ENCODE measurements at regions of chr7 and their contacts with region 1.

Region 1: GRCh38 chr7:5704534-5704922 is 76.9 kb downstream of the RNF216 start:
- DNase-seq: peak; percentile 60 to 89 (median 72)
- ATAC-seq: no peak
- H3K4me3 ChIP-seq: no peak overlapping the region
- H3K4me3 Mint-ChIP-seq: no peak overlapping the region
- H3K27ac ChIP-seq: no peak overlapping the region
- H3K27ac Mint-ChIP-seq: peak overlapping the region; percentile 24
- H3K4me1 ChIP-seq: peaks cover 31% of the 10 kb centered on the region
- H3K4me1 Mint-ChIP-seq: peaks cover 42% of the 10 kb centered on the region
- H3K27me3 ChIP-seq: no peaks in the 10 kb centered on the region
- H3K27me3 Mint-ChIP-seq: no peaks in the 10 kb centered on the region
- CTCF ChIP-seq: peak; percentile 88

Region 2: GRCh38 chr7:5345671-5346070 is 358.9 kb before region 1 on chr7:
- CTCF ChIA-PET with region 1: no interaction called
- POLR2A ChIA-PET with region 1: no interaction called
- intact Hi-C with region 1: no loop called
- DNase-seq: no peak
- ATAC-seq: no peak
- H3K4me3 ChIP-seq: no peak overlapping the region
- H3K4me3 Mint-ChIP-seq: no peak overlapping the region
- H3K27ac ChIP-seq: no peak overlapping the region
- H3K27ac Mint-ChIP-seq: no peak overlapping the region
- H3K4me1 ChIP-seq: no peaks in the 10 kb centered on the region
- H3K4me1 Mint-ChIP-seq: no peaks in the 10 kb centered on the region
- H3K27me3 ChIP-seq: no peaks in the 10 kb centered on the region
- H3K27me3 Mint-ChIP-seq: no peaks in the 10 kb centered on the region
- CTCF ChIP-seq: no peak

Region 3: GRCh38 chr7:5363729-5364128 is 340.8 kb before region 1 on chr7:
- CTCF ChIA-PET with region 1: no interaction called
- POLR2A ChIA-PET with region 1: no interaction called
- intact Hi-C with region 1: loop called in 1 of 2 experiments (anchors 10 kb)
- DNase-seq: no peak
- ATAC-seq: no peak
- H3K4me3 ChIP-seq: no peak overlapping the region
- H3K4me3 Mint-ChIP-seq: no peak overlapping the region
- H3K27ac ChIP-seq: no peak overlapping the region
- H3K27ac Mint-ChIP-seq: no peak overlapping the region
- H3K4me1 ChIP-seq: peaks cover 15% of the 10 kb centered on the region
- H3K4me1 Mint-ChIP-seq: peaks cover 15% of the 10 kb centered on the region
- H3K27me3 ChIP-seq: no peaks in the 10 kb centered on the region
- H3K27me3 Mint-ChIP-seq: no peaks in the 10 kb centered on the region
- CTCF ChIP-seq: no peak

Region 4: DNA sequence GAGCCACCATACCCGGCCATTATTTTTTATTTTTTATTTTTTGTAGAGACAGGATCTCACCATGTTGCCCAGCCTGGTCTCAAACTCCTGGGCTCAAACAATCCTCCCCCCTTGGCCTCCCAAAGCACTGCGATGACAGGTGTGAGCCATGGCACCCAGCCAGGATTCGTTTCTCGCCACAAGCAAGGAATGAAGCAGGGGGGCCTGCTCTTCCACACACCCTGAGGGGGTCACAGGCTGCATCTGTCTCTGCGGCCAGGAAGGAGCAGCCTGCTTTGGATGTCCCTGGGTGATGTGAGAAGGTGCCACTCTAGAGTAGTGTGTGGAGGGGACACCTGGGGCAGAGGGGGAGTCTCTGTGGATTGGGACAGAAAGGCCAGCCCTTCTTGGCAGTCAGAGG is 219.6 kb before region 1 on chr7:
- CTCF ChIA-PET with region 1: no interaction called
- POLR2A ChIA-PET with region 1: no interaction called
- intact Hi-C with region 1: no loop called
- DNase-seq: no peak
- ATAC-seq: no peak
- H3K4me3 ChIP-seq: no peak overlapping the region
- H3K4me3 Mint-ChIP-seq: peak overlapping the region; percentile 48
- H3K27ac ChIP-seq: no peak overlapping the region
- H3K27ac Mint-ChIP-seq: no peak overlapping the region
- H3K4me1 ChIP-seq: peaks cover 28% of the 10 kb centered on the region
- H3K4me1 Mint-ChIP-seq: peaks cover 25% of the 10 kb centered on the region
- H3K27me3 ChIP-seq: no peaks in the 10 kb centered on the region
- H3K27me3 Mint-ChIP-seq: no peaks in the 10 kb centered on the region
- CTCF ChIP-seq: no peak

Region 5: DNA sequence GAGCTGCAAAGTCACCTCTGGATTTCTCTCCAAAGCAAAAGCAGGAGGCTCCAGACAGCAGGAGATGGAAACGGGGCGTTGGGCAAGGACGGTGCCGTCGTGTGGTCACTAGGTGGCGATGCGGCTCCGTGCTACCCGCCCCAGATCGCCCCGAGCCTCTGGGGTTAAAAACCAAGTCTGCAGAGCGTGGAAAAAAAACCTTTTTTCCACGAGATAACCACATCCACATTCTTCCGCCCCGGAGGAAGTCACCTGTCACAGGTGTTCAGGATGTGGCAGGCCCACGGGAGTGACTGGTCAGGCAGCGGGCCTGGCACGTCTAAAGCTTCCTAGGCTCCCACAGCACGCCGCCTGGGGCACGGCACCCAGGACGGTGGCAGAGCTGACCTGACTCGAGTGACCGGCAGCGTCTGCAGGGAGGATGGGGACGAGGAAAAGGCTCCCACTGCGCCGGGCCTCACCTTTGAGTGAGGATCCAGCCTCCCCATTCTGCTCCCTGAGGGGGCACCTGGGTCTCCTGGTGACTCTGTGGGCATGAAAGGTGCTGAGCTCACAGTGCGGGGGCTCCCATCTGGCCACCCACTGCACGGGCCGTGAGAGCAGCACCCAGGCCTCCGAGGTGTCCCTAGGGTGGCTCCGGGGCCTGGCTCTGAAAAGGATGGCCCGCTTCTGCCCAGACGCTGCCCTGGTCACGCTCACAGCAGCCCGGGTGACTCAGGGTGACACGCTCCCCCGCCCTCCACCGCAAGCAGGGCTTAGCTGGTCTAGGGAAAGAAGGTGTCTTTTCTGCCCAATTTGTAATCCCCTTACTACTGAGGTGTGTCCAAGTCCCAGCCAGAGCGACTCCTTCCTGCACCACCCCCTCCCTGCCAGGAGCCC is 209.6 kb before region 1 on chr7:
- CTCF ChIA-PET with region 1: interaction called, 13 read pairs
- POLR2A ChIA-PET with region 1: interaction called, 9 read pairs
- intact Hi-C with region 1: loop called (anchors 1 kb)
- DNase-seq: peak; percentile 71 to 90 (median 77)
- ATAC-seq: peak; percentile 87
- H3K4me3 ChIP-seq: peak overlapping the region; percentile 38
- H3K4me3 Mint-ChIP-seq: peak overlapping the region; percentile 34
- H3K27ac ChIP-seq: no peak overlapping the region
- H3K27ac Mint-ChIP-seq: no peak overlapping the region
- H3K4me1 ChIP-seq: peaks cover 32% of the 10 kb centered on the region
- H3K4me1 Mint-ChIP-seq: peaks cover 26% of the 10 kb centered on the region
- H3K27me3 ChIP-seq: no peaks in the 10 kb centered on the region
- H3K27me3 Mint-ChIP-seq: no peaks in the 10 kb centered on the region
- CTCF ChIP-seq: peak; percentile 98

Region 6: DNA sequence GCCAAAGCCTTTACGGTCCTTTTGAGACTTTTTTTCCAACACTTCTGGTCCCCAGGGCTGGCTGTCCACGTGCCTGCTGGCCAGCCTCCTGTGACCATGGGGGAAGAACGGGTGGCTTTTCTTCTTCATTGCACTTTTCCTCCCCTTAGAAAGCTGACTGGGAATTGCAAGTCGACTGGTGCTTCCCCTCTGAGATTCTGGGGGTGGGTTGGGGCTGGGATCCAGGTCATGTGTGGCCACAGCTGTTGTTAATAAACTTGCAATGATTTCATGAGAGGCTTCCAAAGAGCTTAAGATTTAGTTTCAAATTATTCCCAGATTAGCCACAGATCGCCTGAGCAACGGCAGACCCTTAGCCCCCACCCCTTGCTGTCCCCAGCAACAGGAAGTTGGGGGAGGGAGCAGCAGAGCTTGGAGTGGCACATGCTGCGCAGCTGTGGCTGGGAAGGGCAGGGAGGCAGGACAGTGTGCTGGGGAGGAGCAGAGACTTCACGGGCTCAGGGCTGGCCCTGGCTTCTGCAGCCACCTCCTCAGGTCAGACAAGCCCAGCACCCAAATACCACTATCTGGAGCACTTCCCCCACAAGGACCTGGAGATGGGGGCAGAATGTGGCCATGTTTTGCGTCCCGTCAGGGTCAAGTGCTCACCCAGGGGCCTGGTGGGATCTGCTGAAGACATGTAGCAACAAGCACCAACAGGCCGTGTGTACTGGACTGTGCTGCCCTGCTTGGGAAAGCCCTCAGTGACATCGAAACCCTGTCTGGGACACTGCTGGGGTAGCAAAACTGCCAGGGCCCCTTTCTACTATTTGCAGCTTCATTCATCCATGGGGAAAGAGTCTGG is 70.2 kb before region 1 on chr7:
- CTCF ChIA-PET with region 1: no interaction called
- POLR2A ChIA-PET with region 1: no interaction called
- intact Hi-C with region 1: no loop called
- DNase-seq: no peak
- ATAC-seq: no peak
- H3K4me3 ChIP-seq: no peak overlapping the region
- H3K4me3 Mint-ChIP-seq: no peak overlapping the region
- H3K27ac ChIP-seq: no peak overlapping the region
- H3K27ac Mint-ChIP-seq: no peak overlapping the region
- H3K4me1 ChIP-seq: peaks cover 41% of the 10 kb centered on the region
- H3K4me1 Mint-ChIP-seq: peaks cover 54% of the 10 kb centered on the region
- H3K27me3 ChIP-seq: no peaks in the 10 kb centered on the region
- H3K27me3 Mint-ChIP-seq: no peaks in the 10 kb centered on the region
- CTCF ChIP-seq: no peak

Region 7: DNA sequence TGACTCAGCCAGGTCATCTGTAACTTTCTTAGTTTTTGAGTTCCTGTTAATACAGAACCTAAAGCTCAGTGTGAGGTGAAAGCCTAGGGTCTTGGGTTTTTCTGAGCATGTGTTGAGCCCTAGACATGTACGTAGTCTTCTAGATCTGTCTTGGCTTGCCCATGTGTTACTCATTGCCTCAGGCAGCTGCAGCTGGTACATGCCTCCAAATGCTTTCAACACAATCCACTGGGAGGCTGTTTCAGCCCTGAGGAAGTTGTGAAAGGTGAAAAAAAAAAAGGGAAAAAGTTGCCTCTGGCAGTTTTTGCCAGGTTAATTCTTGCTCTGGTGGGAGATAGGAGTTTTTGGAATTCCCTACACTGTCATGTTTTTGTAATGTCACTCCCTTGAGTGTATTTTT is 57.7 kb before region 1 on chr7:
- CTCF ChIA-PET with region 1: interaction called, 3 read pairs
- POLR2A ChIA-PET with region 1: no interaction called
- intact Hi-C with region 1: loop called in 1 of 2 experiments (anchors 10 kb)
- DNase-seq: no peak
- ATAC-seq: no peak
- H3K4me3 ChIP-seq: no peak overlapping the region
- H3K4me3 Mint-ChIP-seq: no peak overlapping the region
- H3K27ac ChIP-seq: no peak overlapping the region
- H3K27ac Mint-ChIP-seq: no peak overlapping the region
- H3K4me1 ChIP-seq: peaks cover 30% of the 10 kb centered on the region
- H3K4me1 Mint-ChIP-seq: peaks cover 30% of the 10 kb centered on the region
- H3K27me3 ChIP-seq: no peaks in the 10 kb centered on the region
- H3K27me3 Mint-ChIP-seq: no peaks in the 10 kb centered on the region
- CTCF ChIP-seq: no peak

Region 8: GRCh38 chr7:5677538-5678294 is 26.8 kb before region 1 on chr7:
- CTCF ChIA-PET with region 1: interaction called, 26 read pairs
- POLR2A ChIA-PET with region 1: interaction called, 4 read pairs
- intact Hi-C with region 1: no loop called
- DNase-seq: peak in 11 of 14 experiments; percentile 16 to 73 (median 44)
- ATAC-seq: peak; percentile 52
- H3K4me3 ChIP-seq: no peak overlapping the region
- H3K4me3 Mint-ChIP-seq: no peak overlapping the region
- H3K27ac ChIP-seq: no peak overlapping the region
- H3K27ac Mint-ChIP-seq: peak overlapping the region; percentile 60
- H3K4me1 ChIP-seq: peaks cover 45% of the 10 kb centered on the region
- H3K4me1 Mint-ChIP-seq: peaks cover 59% of the 10 kb centered on the region
- H3K27me3 ChIP-seq: no peaks in the 10 kb centered on the region
- H3K27me3 Mint-ChIP-seq: no peaks in the 10 kb centered on the region
- CTCF ChIP-seq: peak; percentile 49

Region 9: DNA sequence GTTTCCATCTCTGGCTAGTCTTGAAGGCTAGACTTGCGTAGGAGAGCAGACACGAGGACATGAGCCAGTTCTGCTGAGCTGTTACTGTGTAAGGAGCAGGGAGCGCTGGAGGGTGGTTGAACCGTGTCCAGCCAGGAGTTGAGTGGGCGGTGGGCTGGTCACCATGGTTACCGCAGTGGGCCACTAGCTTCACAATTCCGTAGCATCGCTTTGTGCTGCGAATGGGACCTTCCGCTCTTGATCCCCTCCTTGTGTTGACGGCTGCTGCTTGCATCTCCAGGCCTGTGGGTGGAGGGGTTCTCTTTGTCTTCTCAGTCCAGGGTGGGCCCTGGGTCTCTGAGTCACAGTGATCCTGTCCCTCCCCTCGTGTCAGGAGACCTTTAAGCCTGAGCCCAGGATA is 126.7 kb after region 1 on chr7:
- CTCF ChIA-PET with region 1: no interaction called
- POLR2A ChIA-PET with region 1: no interaction called
- intact Hi-C with region 1: loop called in 1 of 2 experiments (anchors 5 kb)
- DNase-seq: no peak
- ATAC-seq: no peak
- H3K4me3 ChIP-seq: no peak overlapping the region
- H3K4me3 Mint-ChIP-seq: no peak overlapping the region
- H3K27ac ChIP-seq: no peak overlapping the region
- H3K27ac Mint-ChIP-seq: peak overlapping the region; percentile 74
- H3K4me1 ChIP-seq: peaks cover 53% of the 10 kb centered on the region
- H3K4me1 Mint-ChIP-seq: peaks cover 55% of the 10 kb centered on the region
- H3K27me3 ChIP-seq: no peaks in the 10 kb centered on the region
- H3K27me3 Mint-ChIP-seq: no peaks in the 10 kb centered on the region
- CTCF ChIP-seq: no peak